Dorsolateral prefrontal cortex (tissue), 120 donors: ENCODE measurements at regions of chr1 and their contacts with region 1.

Region 1: DNA sequence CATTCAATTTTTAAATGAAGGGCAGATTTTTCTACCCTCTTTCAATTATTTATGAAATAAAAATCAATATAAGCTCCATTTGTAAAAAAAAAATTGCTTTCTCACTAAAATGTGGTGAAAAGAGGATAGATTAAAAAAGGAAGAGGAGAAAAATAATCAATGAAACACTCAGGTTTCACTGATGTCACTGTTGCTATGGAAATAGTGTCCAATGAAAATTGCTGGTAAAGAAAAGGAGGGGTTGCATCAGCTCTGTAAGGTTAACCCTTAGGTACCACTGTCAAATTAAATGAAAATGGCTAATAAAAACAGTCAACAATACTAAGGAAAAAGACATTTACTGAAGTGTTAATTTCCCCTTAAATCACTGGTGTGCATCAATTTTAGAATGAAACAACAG is 91.6 kb upstream of the TTC39A start:
- DNase-seq: peak in 1 of 10 donors; percentile 24
- H3K4me3 ChIP-seq: peak overlapping the region; percentile 0 to 71 (median 51)
- H3K27ac ChIP-seq: peak overlapping the region in 55 of 59 donors; percentile 20 to 89 (median 77)
- H3K27me3 ChIP-seq: no peaks in the 10 kb centered on the region
- CTCF ChIP-seq: no peak

Region 2: DNA sequence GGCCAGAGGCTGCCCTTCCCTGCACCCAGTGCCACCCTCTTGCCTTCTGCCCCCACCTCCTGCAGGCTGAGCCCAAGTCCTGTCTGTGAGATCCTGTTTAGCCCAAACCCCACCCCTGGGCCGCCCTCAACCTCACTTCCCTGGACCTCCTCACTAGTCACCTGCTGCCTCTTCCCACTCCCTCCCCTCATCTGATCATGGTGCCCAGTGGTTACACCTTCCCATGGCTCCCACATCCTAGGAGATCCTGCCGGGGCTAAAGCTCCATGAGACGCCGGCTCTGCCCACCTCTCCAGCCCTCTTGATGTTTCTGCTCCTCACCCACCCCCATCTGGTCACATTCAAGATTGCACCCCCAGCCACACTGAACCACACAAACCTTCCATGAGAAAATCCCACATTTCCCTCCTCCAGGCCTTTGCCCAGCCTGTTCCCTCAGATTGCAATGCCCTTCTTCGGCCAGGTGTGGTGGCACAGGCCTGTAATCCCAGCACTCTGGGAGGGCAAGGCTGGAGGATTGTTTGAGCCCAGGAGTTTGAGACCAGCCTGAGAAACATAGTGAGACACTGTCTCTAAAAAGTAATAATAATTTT is 108.6 kb before region 1 on chr1:
- intact Hi-C with region 1: no loop called
- DNase-seq: no peak
- H3K4me3 ChIP-seq: no peak overlapping the region
- H3K27ac ChIP-seq: no peak overlapping the region
- H3K27me3 ChIP-seq: no peaks in the 10 kb centered on the region
- CTCF ChIP-seq: peak in 2 of 56 donors; percentile 15 to 23

Region 3: DNA sequence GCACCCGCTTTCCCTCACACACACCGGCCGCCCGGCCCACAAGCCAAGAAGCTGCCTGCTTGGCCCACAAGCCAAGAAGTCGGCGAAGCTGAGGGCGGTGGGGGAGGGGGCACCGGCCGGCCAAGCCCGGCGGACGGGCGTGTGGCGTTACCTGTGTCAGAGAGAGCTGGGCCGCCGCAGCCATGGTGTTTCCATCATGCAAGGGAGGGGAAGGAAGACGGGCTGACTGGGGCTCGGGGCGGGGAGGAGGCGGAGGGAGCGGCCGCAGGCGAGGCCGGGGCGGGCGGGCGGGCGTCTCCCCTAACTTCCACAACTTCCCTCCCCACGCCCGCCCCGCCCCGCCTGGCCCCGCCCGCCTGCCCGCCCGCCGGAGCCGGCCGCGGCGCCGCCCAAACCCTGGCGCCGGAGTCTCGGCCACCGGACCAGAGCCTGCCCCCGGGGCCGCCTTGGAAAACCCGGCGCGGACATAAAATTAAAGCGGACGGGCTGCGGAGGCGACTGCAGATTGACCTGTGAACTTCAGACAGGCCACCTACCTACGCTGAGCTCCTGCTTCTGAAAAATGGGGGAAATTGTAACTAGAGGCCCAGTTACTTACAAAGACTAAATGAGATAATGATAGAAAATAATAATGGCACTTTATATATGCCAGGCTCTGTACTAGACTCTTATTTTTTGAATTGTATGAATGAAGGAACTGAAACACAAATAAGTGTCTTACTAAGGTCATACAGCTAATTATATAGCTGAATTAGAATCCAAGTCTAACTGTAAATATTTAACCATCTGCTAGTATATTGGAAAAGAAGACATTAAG is 97.3 kb after region 1 on chr1 and contains the start of gene EPS15:
- intact Hi-C with region 1: loop called (anchors 5 to 10 kb)
- DNase-seq: peak; percentile 55 to 81 (median 70)
- H3K4me3 ChIP-seq: peak within 1 kb of the TSS; percentile 42 to 96 (median 76)
- H3K27ac ChIP-seq: peak within 1 kb of the TSS; percentile 58 to 99 (median 91)
- H3K27me3 ChIP-seq: no peaks in the 10 kb centered on the region
- CTCF ChIP-seq: peak in 2 of 56 donors; percentile 1 to 8
- total RNA-seq, gene EPS15: 123 to 234 (median 175) TPM